ENCODE measurements at regions of chr17 and their contacts with region 1.

Region 1: GRCh38 chr17:16456742-16457316 is 35.2 kb downstream of the LRRC75A start:
- DNase-seq: no peak
- H3K4me3 ChIP-seq: no peak overlapping the region
- H3K27ac ChIP-seq: no peak overlapping the region
- H3K4me1 ChIP-seq: peaks cover 10% of the 10 kb centered on the region
- H3K27me3 ChIP-seq: no peaks in the 10 kb centered on the region
- CTCF ChIP-seq: no peak

Region 2: DNA sequence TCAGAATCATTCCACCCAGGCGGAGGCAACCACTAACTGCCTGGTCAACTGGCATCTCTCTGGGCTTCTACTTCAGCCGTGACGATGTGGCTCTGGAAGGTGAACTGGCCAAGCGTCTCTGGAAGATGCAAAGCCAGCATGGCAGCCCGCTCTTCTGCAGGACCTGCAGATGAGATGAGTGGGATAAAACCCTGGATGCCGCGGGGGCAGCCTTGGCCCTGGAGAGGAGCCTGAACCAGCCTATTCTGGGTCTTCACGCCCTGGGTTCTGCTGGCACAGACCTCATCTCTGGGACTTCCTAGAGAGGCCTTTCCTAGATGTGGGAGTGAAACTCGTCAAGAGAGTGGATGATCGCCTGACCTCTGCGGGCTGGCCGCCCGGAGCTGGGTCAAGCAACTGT is 65.4 kb before region 1 on chr17:
- CTCF ChIA-PET with region 1: no interaction called
- POLR2A ChIA-PET with region 1: interaction called, 11 read pairs
- intact Hi-C with region 1: no loop called
- DNase-seq: no peak
- H3K4me3 ChIP-seq: no peak overlapping the region
- H3K27ac ChIP-seq: no peak overlapping the region
- H3K4me1 ChIP-seq: no peaks in the 10 kb centered on the region
- H3K27me3 ChIP-seq: no peaks in the 10 kb centered on the region
- CTCF ChIP-seq: no peak

Region 3: GRCh38 chr17:16486373-16487250 is 29.8 kb after region 1 on chr17:
- CTCF ChIA-PET with region 1: interaction called, 3 read pairs
- POLR2A ChIA-PET with region 1: no interaction called
- intact Hi-C with region 1: loop called (anchors 2 kb)
- DNase-seq: peak in 1 of 2 experiments; percentile 97
- H3K4me3 ChIP-seq: no peak overlapping the region
- H3K27ac ChIP-seq: no peak overlapping the region
- H3K4me1 ChIP-seq: peaks cover 7% of the 10 kb centered on the region; the same call in 1 of the 2 replicates
- H3K27me3 ChIP-seq: no peaks in the 10 kb centered on the region
- CTCF ChIP-seq: no peak

Measured in PC-9 (cell line).